ENCODE measurements at regions of chr12 and their contacts with region 1.

Region 1: DNA sequence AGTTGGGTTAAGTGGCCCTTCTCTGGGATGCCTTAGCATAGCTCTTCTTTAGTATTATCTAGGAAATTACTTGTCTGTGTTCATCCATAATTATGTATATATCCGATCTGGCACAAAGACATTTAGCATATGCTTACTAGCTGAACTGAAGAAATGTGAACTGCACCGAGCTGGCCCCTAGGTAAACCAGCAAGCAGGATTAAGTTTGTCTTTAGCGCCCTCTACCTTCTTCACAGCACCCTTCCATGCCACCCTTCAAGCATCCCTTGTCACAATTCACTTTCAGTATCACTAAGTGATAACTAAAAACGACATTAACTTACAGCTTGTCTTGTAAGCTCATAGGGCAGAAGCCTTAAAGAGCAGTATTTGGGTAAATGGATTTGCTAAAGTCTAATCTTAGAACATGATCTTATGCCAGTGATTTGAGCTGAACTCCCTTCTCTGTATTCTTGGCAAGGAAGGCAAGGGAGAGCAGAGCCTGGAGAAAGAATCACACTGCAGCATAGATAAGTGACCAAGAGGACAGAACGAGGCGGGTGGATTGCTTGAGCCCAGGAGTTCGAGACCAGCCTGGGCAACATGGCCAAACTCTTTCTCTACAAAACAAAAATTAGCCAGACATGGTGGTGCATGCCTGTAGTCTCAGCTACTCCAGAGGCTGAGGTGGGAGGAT is 2.6 kb upstream of the HAL start:
- DNase-seq: no peak
- H3K4me3 ChIP-seq: no peak overlapping the region
- H3K27ac ChIP-seq: peak overlapping the region in 1 of 2 donors; percentile 14
- H3K4me1 ChIP-seq: peaks cover 0 to 8% (median 7%) of the 10 kb centered on the region in 4 donors
- H3K27me3 ChIP-seq: no peaks in the 10 kb centered on the region
- CTCF ChIP-seq: peak; percentile 53 to 57

Region 2: DNA sequence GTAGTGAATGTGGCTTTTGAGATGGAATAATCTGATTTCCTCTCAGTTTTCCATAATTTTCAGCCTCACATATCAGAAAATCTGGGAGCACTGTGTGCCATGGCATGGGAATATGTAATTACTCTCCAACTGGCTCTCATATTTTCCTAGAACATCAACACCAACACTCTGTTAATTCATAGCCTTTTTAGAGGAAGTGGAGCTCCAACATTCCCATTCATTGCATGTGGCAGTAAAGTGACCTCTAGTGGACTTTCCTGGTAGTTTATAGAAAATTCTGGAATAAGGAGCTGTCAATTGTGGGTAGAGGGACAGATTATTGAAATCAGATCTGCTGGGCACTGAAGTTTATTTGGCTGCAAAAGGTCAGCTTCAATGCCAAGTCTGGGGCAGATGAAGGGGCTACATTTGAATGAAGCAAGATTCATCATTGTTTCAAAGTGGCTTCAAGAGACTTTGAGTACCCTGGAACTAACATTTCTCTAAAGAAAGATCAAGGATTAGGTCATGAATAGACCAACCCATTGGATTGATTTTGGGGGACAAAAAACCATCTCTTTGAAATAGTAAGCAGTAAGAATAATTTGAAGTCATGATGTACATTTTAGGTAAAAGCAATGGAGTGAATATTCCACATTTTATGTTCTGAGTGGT is 423.8 kb before region 1 on chr12:
- intact Hi-C with region 1: loop called (anchors 10 kb)
- DNase-seq: no peak
- H3K4me3 ChIP-seq: no peak overlapping the region
- H3K27ac ChIP-seq: no peak overlapping the region
- H3K4me1 ChIP-seq: no peaks in the 10 kb centered on the region
- H3K27me3 ChIP-seq: no peaks in the 10 kb centered on the region
- CTCF ChIP-seq: peak; percentile 49 to 67

Region 3: GRCh38 chr12:96274331-96274730 is 275.6 kb after region 1 on chr12:
- intact Hi-C with region 1: no loop called
- DNase-seq: no peak
- H3K4me3 ChIP-seq: no peak overlapping the region
- H3K27ac ChIP-seq: no peak overlapping the region
- H3K4me1 ChIP-seq: no peaks in the 10 kb centered on the region
- H3K27me3 ChIP-seq: no peaks in the 10 kb centered on the region
- CTCF ChIP-seq: no peak